ENCODE measurements at regions of chr12 and their contacts with region 1.

Region 1: GRCh38 chr12:98572010-98572409 is 21.5 kb upstream of the SLC25A3 start:
- DNase-seq: peak in 2 of 3 donors; percentile 13 to 18
- H3K4me3 ChIP-seq: no peak overlapping the region
- H3K27ac ChIP-seq: no peak overlapping the region
- H3K4me1 ChIP-seq: no peaks in the 10 kb centered on the region
- H3K27me3 ChIP-seq: no peaks in the 10 kb centered on the region

Region 2: GRCh38 chr12:98490501-98491453 is 81.2 kb before region 1 on chr12:
- CTCF ChIA-PET with region 1: no interaction called
- POLR2A ChIA-PET with region 1: no interaction called
- DNase-seq: peak; percentile 76 to 83 (median 77)
- H3K4me3 ChIP-seq: peak overlapping the region in 6 of 7 experiments; percentile 23 to 64 (median 46)
- H3K27ac ChIP-seq: no peak overlapping the region
- H3K4me1 ChIP-seq: peaks cover 0 to 8% (median 0%) of the 10 kb centered on the region in 4 experiments
- H3K27me3 ChIP-seq: no peaks in the 10 kb centered on the region

Region 3: DNA sequence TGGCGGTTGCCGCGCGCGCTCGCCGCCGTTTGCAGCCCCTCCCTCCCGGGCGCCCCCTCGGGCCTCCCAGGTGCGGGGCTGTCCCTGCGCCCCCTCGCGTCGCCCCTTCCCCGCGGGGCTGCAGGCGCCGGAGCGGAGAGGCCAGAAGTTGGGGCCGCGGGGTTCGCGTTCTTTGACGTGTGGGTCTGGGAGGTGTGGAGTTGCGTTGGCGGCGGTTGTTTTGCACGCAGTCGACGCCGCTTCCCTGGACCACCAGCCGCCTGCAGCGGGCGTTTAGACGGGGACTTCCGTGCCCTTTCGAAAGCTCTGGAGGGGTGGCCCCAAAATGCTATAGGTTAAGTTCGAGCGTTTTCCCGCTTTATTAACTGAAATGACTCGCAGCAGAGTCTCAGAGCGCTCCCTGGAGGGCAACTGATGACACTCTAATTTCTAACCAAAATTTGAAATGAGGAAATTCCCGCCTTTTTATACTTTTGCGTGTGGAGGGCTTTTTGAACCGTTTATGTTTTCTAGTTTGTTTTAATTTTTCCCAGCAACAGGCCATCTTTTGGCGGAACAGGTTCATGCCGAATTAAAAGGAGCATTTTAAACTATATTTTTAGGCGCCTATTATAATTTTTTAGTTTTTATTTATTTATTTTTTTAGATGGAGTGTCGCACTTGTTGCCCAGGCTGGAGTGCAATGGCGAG is 55.7 kb before region 1 on chr12:
- CTCF ChIA-PET with region 1: no interaction called
- POLR2A ChIA-PET with region 1: no interaction called
- DNase-seq: peak; percentile 90 to 96 (median 95)
- H3K4me3 ChIP-seq: peak overlapping the region; percentile 93 to 100 (median 98)
- H3K27ac ChIP-seq: peak overlapping the region; percentile 86 to 95
- H3K4me1 ChIP-seq: peaks cover 12 to 38% (median 22%) of the 10 kb centered on the region in 4 experiments
- H3K27me3 ChIP-seq: no peaks in the 10 kb centered on the region

Region 4: DNA sequence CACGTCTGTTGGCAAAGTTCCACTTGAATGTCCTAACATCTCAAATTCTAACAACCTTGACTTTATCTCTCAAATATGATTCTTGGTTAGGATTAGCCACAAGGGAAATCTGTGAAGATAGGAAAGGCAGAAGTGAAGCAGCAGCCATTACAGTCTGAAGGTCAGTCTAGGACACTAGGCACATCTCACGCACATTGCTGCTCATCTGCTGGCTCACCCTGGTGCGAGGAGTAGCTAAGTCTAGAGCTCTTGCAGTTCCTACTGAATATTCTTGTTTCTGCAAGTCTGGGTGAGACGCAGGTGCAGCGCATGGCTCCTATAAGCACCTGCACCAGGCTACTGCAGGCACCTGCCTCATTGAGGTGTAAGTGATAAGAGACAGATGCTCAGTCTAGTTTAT is 15.1 kb after region 1 on chr12:
- CTCF ChIA-PET with region 1: interaction called, 15 read pairs
- POLR2A ChIA-PET with region 1: no interaction called
- DNase-seq: no peak
- H3K4me3 ChIP-seq: no peak overlapping the region
- H3K27ac ChIP-seq: no peak overlapping the region
- H3K4me1 ChIP-seq: no peaks in the 10 kb centered on the region
- H3K27me3 ChIP-seq: no peaks in the 10 kb centered on the region

Region 5: GRCh38 chr12:98593351-98594049 is 21.5 kb after region 1 on chr12 and contains the start of gene SLC25A3:
- CTCF ChIA-PET with region 1: interaction called, 15 read pairs
- POLR2A ChIA-PET with region 1: interaction called, 3 read pairs
- DNase-seq: peak; percentile 98 to 99 (median 99)
- H3K4me3 ChIP-seq: peak within 1 kb of the TSS; percentile 85 to 100 (median 99)
- H3K27ac ChIP-seq: peak within 1 kb of the TSS; percentile 96 to 98
- H3K4me1 ChIP-seq: peaks cover 10 to 20% (median 13%) of the 10 kb centered on the region in 4 experiments
- H3K27me3 ChIP-seq: no peaks in the 10 kb centered on the region

Region 6: GRCh38 chr12:98653866-98654493 is 82.0 kb after region 1 on chr12:
- CTCF ChIA-PET with region 1: interaction called, 87 read pairs
- POLR2A ChIA-PET with region 1: no interaction called
- DNase-seq: peak; percentile 71 to 82 (median 80)
- H3K4me3 ChIP-seq: no peak overlapping the region
- H3K27ac ChIP-seq: no peak overlapping the region
- H3K4me1 ChIP-seq: peaks cover 0 to 9% (median 2%) of the 10 kb centered on the region in 4 experiments
- H3K27me3 ChIP-seq: no peaks in the 10 kb centered on the region